Activated CD4-positive, alpha-beta memory T cell treated with anti-CD3 and anti-CD28 coated beads for 36 hours (primary cell): ENCODE measurements at regions of chr17 and their contacts with region 1.

Region 1: DNA sequence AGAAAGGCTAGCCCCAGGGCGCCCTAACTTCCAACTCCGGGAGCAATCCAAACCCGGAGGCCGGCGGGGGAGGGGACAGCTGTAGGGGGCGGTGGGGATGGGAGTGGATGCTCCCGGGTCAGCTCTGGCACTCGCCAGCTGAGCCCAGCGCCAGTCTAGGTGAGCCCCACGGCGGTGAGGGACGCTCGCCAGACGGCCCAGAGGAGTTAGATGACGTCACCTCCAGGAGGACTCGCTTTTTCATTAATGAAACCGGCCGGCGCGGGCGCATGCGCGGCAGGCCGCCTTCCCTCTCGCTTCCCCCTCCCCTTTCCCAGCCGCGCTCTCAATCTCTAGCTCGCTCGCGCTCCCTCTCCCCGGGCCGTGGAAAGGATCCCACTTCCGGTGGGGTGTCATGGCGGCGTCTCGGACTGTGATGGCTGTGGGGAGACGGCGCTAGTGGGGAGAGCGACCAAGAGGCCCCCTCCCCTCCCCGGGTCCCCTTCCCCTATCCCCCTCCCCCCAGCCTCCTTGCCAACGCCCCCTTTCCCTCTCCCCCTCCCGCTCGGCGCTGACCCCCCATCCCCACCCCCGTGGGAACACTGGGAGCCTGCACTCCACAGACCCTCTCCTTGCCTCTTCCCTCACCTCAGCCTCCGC is at the start of gene NF1:
- DNase-seq: peak; percentile 93
- H3K4me3 Mint-ChIP-seq: peak within 1 kb of the TSS; percentile 94
- H3K27ac Mint-ChIP-seq: peak within 1 kb of the TSS; percentile 73
- H3K4me1 Mint-ChIP-seq: peaks cover 11% of the 10 kb centered on the region
- H3K27me3 Mint-ChIP-seq: no peaks in the 10 kb centered on the region
- total RNA-seq, gene NF1: 26.5 to 27.0 TPM

Region 2: GRCh38 chr17:30926516-30926915 is 168.2 kb before region 1 on chr17:
- CTCF ChIA-PET with region 1: no interaction called
- POLR2A ChIA-PET with region 1: no interaction called
- intact Hi-C with region 1: no loop called
- DNase-seq: no peak
- H3K4me3 Mint-ChIP-seq: no peak overlapping the region
- H3K27ac Mint-ChIP-seq: no peak overlapping the region
- H3K4me1 Mint-ChIP-seq: peaks cover 7% of the 10 kb centered on the region
- H3K27me3 Mint-ChIP-seq: peaks cover 30% of the 10 kb centered on the region

Region 3: GRCh38 chr17:31068291-31068690 is 26.4 kb before region 1 on chr17:
- CTCF ChIA-PET with region 1: interaction called, 3 read pairs
- POLR2A ChIA-PET with region 1: no interaction called
- intact Hi-C with region 1: loop called (anchors 2 kb)
- DNase-seq: peak; percentile 79
- H3K4me3 Mint-ChIP-seq: no peak overlapping the region
- H3K27ac Mint-ChIP-seq: no peak overlapping the region
- H3K4me1 Mint-ChIP-seq: no peaks in the 10 kb centered on the region
- H3K27me3 Mint-ChIP-seq: no peaks in the 10 kb centered on the region

Region 4: GRCh38 chr17:31079731-31080130 is 15.0 kb before region 1 on chr17:
- CTCF ChIA-PET with region 1: no interaction called
- POLR2A ChIA-PET with region 1: no interaction called
- intact Hi-C with region 1: no loop called
- DNase-seq: no peak
- H3K4me3 Mint-ChIP-seq: no peak overlapping the region
- H3K27ac Mint-ChIP-seq: no peak overlapping the region
- H3K4me1 Mint-ChIP-seq: no peaks in the 10 kb centered on the region
- H3K27me3 Mint-ChIP-seq: no peaks in the 10 kb centered on the region

Region 5: DNA sequence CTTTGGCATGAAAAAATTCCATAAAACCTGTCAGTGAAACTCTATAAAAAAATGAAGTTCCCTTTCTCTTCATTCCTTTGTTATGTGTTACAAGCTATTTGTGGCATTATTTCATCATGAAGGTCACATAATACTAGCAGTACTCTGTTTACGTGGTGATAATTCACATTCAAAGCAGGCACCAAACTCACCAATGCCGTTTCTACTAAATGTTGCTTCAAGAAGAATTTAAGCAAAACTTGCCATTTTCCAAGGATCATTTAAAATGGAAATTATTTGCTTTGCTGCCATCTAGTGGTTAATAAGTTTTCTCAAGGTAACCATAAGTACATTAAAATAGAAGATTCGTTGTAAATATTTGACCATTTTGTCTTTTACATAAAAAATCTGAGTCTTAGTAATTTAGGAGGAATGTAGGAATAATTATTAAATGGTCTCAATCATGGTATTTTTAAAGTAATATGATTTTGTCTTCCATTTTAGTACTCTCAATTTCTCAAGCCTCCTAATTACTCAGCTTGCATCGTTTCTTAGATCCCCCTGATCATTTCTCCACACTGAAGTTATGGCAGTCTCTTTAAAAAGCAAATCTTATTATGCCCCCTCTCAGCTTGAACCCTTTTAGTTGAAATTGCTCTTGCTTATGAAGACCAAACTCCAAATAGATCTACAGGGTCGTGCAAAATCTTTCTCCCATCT is 121.5 kb after region 1 on chr17:
- CTCF ChIA-PET with region 1: interaction called, 5 read pairs
- POLR2A ChIA-PET with region 1: no interaction called
- intact Hi-C with region 1: loop called (anchors 10 kb)
- DNase-seq: no peak
- H3K4me3 Mint-ChIP-seq: no peak overlapping the region
- H3K27ac Mint-ChIP-seq: no peak overlapping the region
- H3K4me1 Mint-ChIP-seq: no peaks in the 10 kb centered on the region
- H3K27me3 Mint-ChIP-seq: no peaks in the 10 kb centered on the region